Activated T-helper 1 cell treated with anti-CD3 and anti-CD28 coated beads, Interleukin-12 subunit alpha, Interleukin-12 subunit beta, Interleukin-2, Interleukin-4 antibody, amounts not matched to agents 30 ng/mL and 10 ng/mL and 1 ng/mL, durations not matched to agents 14 hours and 24 hours and 36 hours (primary cell): ENCODE measurements at regions of chr11 and their contacts with region 1.

Region 1: DNA sequence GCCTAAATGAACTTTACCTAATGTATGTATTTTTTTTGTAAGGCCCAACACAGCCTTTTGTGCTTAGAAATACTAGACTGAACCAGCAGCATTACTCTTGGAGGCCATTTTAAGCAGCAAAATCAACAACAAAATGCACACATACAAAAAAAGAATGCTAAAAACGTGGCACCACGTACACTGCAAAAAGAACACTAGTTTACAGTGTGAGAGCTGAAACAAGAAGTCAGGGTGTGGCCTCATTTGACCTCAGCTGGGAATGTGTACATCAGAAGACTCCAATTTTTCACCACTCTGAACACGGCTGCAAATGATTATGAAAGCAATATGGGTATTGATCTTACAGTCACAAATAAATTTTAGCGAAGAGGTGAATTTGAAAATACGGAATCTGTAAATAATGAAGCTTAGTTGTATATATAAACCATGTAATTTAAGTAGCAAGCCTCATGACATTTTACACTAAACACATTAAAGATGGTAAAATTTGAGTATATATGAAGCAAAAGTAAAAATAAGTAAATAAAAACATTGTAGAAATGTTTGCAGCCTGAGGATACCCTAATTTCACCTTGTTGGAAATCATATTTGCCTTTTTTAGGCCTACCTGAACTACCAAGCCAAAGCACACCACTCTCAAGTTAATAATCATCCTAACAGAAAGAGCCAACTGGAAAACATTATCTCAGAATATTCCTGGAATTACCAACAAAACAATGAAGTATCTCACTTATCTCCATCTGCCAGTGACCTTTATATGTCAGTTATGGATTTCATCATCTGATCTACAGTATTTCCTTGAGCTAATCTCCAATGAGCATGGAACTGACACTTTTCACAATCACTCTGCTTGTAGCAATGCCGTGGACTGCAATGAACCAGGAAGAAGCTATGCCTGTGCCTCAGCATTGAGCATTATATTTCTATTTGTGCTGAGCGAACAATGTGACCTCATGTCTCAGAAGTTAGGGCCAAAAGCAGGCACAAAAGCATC is 319.5 kb upstream of the FAT3 start:
- DNase-seq: no peak
- H3K4me3 Mint-ChIP-seq: no peak overlapping the region
- H3K27ac Mint-ChIP-seq: no peak overlapping the region
- H3K4me1 Mint-ChIP-seq: no peaks in the 10 kb centered on the region
- H3K27me3 Mint-ChIP-seq: no peaks in the 10 kb centered on the region

Region 2: GRCh38 chr11:91880660-91881059 is 24.4 kb before region 1 on chr11:
- intact Hi-C with region 1: loop called (anchors 1 kb)
- DNase-seq: no peak
- H3K4me3 Mint-ChIP-seq: no peak overlapping the region
- H3K27ac Mint-ChIP-seq: no peak overlapping the region
- H3K4me1 Mint-ChIP-seq: no peaks in the 10 kb centered on the region
- H3K27me3 Mint-ChIP-seq: peaks cover 2% of the 10 kb centered on the region